MCF 10A (cell line): ENCODE measurements at regions of chr10 and their contacts with region 1.

Region 1: DNA sequence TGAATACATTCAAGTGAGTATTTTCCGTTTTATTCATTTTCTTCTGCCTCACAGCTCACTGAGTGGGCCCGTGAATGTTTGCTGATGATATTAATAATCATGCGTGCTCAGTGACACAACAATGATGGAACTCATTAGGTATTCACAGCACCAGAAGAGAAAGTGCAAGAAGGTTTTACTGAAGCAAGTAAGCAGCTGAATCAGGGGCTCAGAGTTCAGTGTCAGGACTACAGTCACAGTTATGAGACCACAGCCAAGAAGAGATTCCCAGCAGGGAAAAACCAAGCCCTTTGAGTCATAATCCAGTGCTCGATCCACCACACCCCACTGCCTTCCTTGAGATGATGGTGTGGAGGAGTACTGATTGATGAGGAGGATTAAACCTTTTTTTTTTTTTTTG is 247.4 kb downstream of the KIAA1217 start:
- DNase-seq: peak; percentile 72
- H3K4me3 Mint-ChIP-seq: peak overlapping the region; percentile 44
- H3K27ac Mint-ChIP-seq: peak overlapping the region; percentile 73
- H3K4me1 Mint-ChIP-seq: peaks cover 23% of the 10 kb centered on the region
- H3K27me3 Mint-ChIP-seq: no peaks in the 10 kb centered on the region
- CTCF ChIP-seq: no peak

Region 2: DNA sequence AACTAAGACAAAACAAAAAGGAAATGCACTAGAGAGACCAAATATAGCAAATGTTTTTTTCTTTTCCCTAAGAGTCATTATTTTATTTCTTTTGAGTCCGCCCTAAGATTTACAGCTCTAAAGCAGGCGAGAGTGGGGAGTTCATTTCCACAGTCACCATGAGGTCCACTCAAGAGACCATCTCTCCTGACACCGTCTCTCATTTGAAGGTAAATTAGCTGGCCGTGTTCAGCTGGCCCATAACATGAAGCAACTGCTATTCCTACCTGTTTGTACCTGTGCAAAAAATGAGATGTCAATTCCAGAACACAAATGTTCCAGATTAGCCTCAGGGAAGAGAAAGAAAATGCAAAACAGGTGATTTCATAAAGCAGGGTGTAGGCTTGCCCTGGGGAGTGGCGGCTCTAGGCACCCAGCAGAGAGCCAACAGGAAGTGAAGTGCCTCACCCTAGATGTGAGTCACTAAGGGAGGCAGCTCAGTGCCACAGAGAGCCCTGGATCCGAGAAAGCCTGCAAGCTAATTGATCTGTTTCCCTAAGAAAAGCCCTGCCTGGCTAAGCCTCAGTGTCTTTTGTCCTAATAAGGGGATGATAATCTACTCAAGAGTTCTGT is 27.3 kb after region 1 on chr10:
- CTCF ChIA-PET with region 1: interaction called, 3 read pairs
- POLR2A ChIA-PET with region 1: interaction called, 60 read pairs
- intact Hi-C with region 1: no loop called
- DNase-seq: peak; percentile 98
- H3K4me3 Mint-ChIP-seq: peak overlapping the region; percentile 55
- H3K27ac Mint-ChIP-seq: peak overlapping the region; percentile 98
- H3K4me1 Mint-ChIP-seq: peaks cover 32% of the 10 kb centered on the region
- H3K27me3 Mint-ChIP-seq: no peaks in the 10 kb centered on the region
- CTCF ChIP-seq: no peak